Naive thymus-derived CD8-positive, alpha-beta T cell (primary cell): ENCODE measurements at regions of chr17 and their contacts with region 1.

Region 1: GRCh38 chr17:63425482-63425881 is 20.6 kb downstream of the CYB561 start:
- DNase-seq: peak; percentile 39 to 82 (median 67)
- ATAC-seq: peak; percentile 73 to 86
- H3K4me3 Mint-ChIP-seq: peak overlapping the region in 2 of 10 donors; percentile 15 to 20
- H3K27ac Mint-ChIP-seq: peak overlapping the region in 3 of 10 donors; percentile 31 to 50 (median 35)
- H3K4me1 Mint-ChIP-seq: peaks cover 14 to 40% (median 36%) of the 10 kb centered on the region in 4 donors
- H3K27me3 Mint-ChIP-seq: no peaks in the 10 kb centered on the region

Region 2: GRCh38 chr17:63478791-63479494 is 53.5 kb after region 1 on chr17:
- POLR2A ChIA-PET with region 1: interaction called, 12 read pairs
- DNase-seq: peak; percentile 48 to 84 (median 66)
- ATAC-seq: peak; percentile 75 to 85
- H3K4me3 Mint-ChIP-seq: peak overlapping the region in 9 of 10 donors; percentile 6 to 59 (median 39)
- H3K27ac Mint-ChIP-seq: peak overlapping the region in 1 of 10 donors; percentile 20
- H3K4me1 Mint-ChIP-seq: peaks cover 10 to 18% (median 14%) of the 10 kb centered on the region in 4 donors
- H3K27me3 Mint-ChIP-seq: peaks cover 5 to 51% (median 26%) of the 10 kb centered on the region in 5 donors